ENCODE measurements at regions of chr11 and their contacts with region 1.

Region 1: DNA sequence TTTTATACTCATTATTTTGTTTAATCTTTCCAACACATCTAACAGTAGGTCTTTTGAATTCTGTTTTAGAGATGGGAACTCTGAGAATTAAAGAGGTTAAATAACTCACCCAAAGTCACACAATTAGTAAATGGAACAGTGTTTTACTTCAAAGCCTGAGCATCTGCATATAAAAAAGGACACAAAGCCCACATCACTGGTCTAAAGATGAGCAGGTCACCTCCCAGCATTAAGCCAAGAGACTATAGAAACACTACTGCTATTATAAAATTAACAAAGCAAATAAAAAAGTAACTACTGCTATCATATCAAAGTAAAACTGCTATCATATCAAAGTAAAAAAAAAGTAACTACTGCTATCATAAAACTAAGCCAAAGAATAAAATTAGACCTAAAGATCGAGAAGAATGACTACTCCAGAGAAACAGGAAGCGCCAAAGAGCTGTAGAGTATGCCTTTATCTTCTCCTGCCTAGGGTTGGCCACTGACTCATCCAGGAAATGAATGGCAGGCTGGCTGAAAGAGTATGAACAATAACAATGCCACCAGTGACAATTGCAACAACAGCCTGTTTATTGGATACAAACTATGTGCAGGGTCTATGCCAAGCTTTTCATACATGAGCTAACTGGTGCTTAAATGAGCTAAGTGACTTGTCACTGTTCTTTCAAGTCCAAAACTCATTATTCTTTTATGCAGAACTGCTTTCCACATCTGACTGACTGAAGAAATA is 1153.0 kb upstream of the TENM4 start:
- DNase-seq: peak; percentile 97
- H3K4me3 ChIP-seq: no peak overlapping the region
- H3K27ac ChIP-seq: peak overlapping the region; percentile 90
- H3K4me1 ChIP-seq: peaks cover 28% of the 10 kb centered on the region
- H3K27me3 ChIP-seq: no peaks in the 10 kb centered on the region
- CTCF ChIP-seq: no peak
- POLR2A ChIP-seq: peak; percentile 70

Region 2: GRCh38 chr11:80432057-80432456 is 161.8 kb before region 1 on chr11:
- CTCF ChIA-PET with region 1: no interaction called
- POLR2A ChIA-PET with region 1: no interaction called
- dilution Hi-C with region 1: no loop called
- intact Hi-C with region 1: loop called (anchors 10 kb)
- DNase-seq: peak; percentile 65
- H3K4me3 ChIP-seq: no peak overlapping the region
- H3K27ac ChIP-seq: no peak overlapping the region
- H3K4me1 ChIP-seq: peaks cover 5% of the 10 kb centered on the region
- H3K27me3 ChIP-seq: no peaks in the 10 kb centered on the region
- CTCF ChIP-seq: no peak
- POLR2A ChIP-seq: no peak

Region 3: GRCh38 chr11:80451105-80451504 is 142.7 kb before region 1 on chr11:
- CTCF ChIA-PET with region 1: no interaction called
- POLR2A ChIA-PET with region 1: no interaction called
- dilution Hi-C with region 1: no loop called
- intact Hi-C with region 1: no loop called
- DNase-seq: no peak
- H3K4me3 ChIP-seq: no peak overlapping the region
- H3K27ac ChIP-seq: no peak overlapping the region
- H3K4me1 ChIP-seq: no peaks in the 10 kb centered on the region
- H3K27me3 ChIP-seq: no peaks in the 10 kb centered on the region
- CTCF ChIP-seq: no peak
- POLR2A ChIP-seq: no peak

Region 4: DNA sequence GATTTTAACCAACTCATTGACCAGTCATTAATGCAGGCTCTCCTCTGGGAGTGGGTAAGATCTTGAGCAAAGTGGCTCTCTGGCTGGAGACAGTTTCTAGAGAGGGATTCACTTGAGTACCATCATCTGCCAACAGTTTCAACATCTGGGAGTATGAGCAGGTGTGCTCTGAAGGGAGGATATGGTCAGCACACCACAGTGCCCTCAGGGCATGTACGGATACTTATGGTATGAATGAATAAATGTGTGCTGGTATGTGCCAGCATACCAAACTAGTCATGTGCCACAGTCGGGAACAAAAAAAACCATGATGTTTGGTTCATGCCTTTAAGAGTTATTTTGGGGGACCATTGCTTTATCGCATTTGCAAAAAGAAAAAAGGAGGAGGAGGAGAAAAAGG is 44.5 kb after region 1 on chr11:
- CTCF ChIA-PET with region 1: no interaction called
- POLR2A ChIA-PET with region 1: no interaction called
- dilution Hi-C with region 1: no loop called
- intact Hi-C with region 1: no loop called
- DNase-seq: no peak
- H3K4me3 ChIP-seq: no peak overlapping the region
- H3K27ac ChIP-seq: no peak overlapping the region
- H3K4me1 ChIP-seq: no peaks in the 10 kb centered on the region
- H3K27me3 ChIP-seq: no peaks in the 10 kb centered on the region
- CTCF ChIP-seq: no peak
- POLR2A ChIP-seq: no peak

Region 5: GRCh38 chr11:80855975-80856524 is 262.2 kb after region 1 on chr11:
- CTCF ChIA-PET with region 1: interaction called, 3 read pairs
- POLR2A ChIA-PET with region 1: no interaction called
- dilution Hi-C with region 1: no loop called
- intact Hi-C with region 1: loop called (anchors 5 kb)
- DNase-seq: peak; percentile 67
- H3K4me3 ChIP-seq: no peak overlapping the region
- H3K27ac ChIP-seq: no peak overlapping the region
- H3K4me1 ChIP-seq: peaks cover 26% of the 10 kb centered on the region
- H3K27me3 ChIP-seq: no peaks in the 10 kb centered on the region
- CTCF ChIP-seq: no peak
- POLR2A ChIP-seq: no peak

Measured in endothelial cell of umbilical vein (primary cell).